ENCODE measurements at regions of chr5 and their contacts with region 1.

Region 1: GRCh38 chr5:145825751-145826180 is 9.4 kb downstream of the PRELID2 start:
- DNase-seq: peak; percentile 34
- CTCF ChIP-seq: peak; percentile 52

Region 2: GRCh38 chr5:144203750-144204596 is 1621.8 kb before region 1 on chr5:
- CTCF ChIA-PET with region 1: interaction called, 57 read pairs
- POLR2A ChIA-PET with region 1: no interaction called
- DNase-seq: peak; percentile 33
- CTCF ChIP-seq: peak; percentile 78

Region 3: GRCh38 chr5:145681686-145682085 is 144.1 kb before region 1 on chr5:
- CTCF ChIA-PET with region 1: interaction called, 14 read pairs
- POLR2A ChIA-PET with region 1: no interaction called
- DNase-seq: peak; percentile 49
- CTCF ChIP-seq: peak; percentile 64

Region 4: GRCh38 chr5:145697251-145697990 is 128.3 kb before region 1 on chr5:
- CTCF ChIA-PET with region 1: interaction called, 15 read pairs
- POLR2A ChIA-PET with region 1: no interaction called
- DNase-seq: peak; percentile 25
- CTCF ChIP-seq: peak; percentile 48

Region 5: DNA sequence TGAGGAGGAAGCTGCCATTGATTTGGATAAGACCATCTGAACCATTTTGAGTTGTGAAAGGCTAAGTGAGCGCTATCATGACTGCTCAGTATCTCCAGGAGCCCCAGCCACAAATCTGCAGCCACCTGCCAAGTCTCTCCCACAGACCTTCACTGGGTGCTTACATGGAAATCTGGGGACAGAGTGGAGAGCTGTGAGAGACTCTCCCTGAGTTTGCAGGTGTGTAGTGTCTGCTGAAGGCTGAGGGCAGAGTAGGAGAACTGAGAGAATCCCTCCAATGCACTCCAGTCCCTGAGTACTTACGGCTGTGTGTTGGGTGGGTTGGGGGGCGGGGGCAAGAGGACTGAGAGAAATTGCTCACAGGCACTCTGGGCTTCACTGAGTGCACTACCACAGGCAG is 114.3 kb before region 1 on chr5:
- CTCF ChIA-PET with region 1: no interaction called
- POLR2A ChIA-PET with region 1: no interaction called
- DNase-seq: no peak
- CTCF ChIP-seq: no peak

Region 6: DNA sequence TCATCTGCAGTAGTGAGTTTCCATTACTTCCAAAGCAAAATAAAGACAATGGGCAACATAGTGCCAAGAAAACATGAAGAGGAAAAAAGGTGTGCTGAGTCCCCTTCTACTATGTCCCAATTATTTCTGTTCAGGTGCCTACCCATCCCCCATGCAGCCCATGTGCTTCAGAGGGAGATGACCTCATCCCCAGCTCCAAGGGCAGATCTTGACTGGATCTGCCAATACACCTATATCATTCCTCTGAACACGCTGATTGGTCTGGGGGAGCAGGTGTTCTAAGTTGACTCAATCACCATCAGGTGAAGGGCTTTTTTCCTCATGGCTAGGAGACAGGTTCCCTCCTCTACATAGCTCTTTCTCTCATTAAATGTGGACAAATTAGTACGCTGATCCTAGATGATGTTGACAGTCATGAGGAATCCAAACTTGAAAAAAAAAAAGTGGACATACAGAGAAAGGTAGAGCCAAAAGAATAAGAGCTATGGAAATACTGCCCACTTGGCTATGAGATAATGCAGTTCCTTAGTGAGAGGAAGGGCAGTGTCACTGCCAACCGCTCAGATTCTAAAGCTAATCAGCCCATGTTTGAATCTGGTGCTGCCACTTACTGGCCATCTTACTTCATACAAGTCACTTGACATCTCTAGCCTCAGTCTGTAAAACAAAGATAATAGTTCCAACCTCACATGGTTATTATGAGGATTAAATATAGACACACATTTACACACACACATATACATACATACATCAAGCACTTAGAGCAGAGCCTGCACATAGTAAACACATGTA is 13.7 kb before region 1 on chr5:
- CTCF ChIA-PET with region 1: interaction called, 12 read pairs
- POLR2A ChIA-PET with region 1: no interaction called
- DNase-seq: no peak
- CTCF ChIP-seq: no peak

Region 7: GRCh38 chr5:145840458-145841132 is 14.8 kb after region 1 on chr5:
- CTCF ChIA-PET with region 1: interaction called, 23 read pairs
- POLR2A ChIA-PET with region 1: no interaction called
- DNase-seq: no peak
- CTCF ChIP-seq: no peak

Region 8: GRCh38 chr5:146130440-146131045 is 304.8 kb after region 1 on chr5:
- CTCF ChIA-PET with region 1: no interaction called
- POLR2A ChIA-PET with region 1: no interaction called
- DNase-seq: no peak
- CTCF ChIP-seq: peak; percentile 48

Measured in GM10248 (cell line).